Activated T-helper 1 cell treated with anti-CD3 and anti-CD28 coated beads, Interleukin-12 subunit alpha, Interleukin-12 subunit beta, Interleukin-2, Interleukin-4 antibody, amounts not matched to agents 30 ng/mL and 10 ng/mL and 1 ng/mL, durations not matched to agents 14 hours and 24 hours and 36 hours (primary cell): ENCODE measurements at regions of chr6 and their contacts with region 1.

Region 1: GRCh38 chr6:33344701-33345697 is 27.5 kb upstream of the ZBTB22 start:
- DNase-seq: peak; percentile 59
- H3K4me3 Mint-ChIP-seq: peak overlapping the region; percentile 77
- H3K27ac Mint-ChIP-seq: peak overlapping the region; percentile 82
- H3K4me1 Mint-ChIP-seq: peaks cover 26% of the 10 kb centered on the region
- H3K27me3 Mint-ChIP-seq: peaks cover 9% of the 10 kb centered on the region

Region 2: GRCh38 chr6:33018904-33019303 is 326.1 kb before region 1 on chr6:
- intact Hi-C with region 1: no loop called
- DNase-seq: peak; percentile 54
- H3K4me3 Mint-ChIP-seq: peak overlapping the region; percentile 58
- H3K27ac Mint-ChIP-seq: peak overlapping the region; percentile 54
- H3K4me1 Mint-ChIP-seq: peaks cover 37% of the 10 kb centered on the region
- H3K27me3 Mint-ChIP-seq: no peaks in the 10 kb centered on the region

Region 3: DNA sequence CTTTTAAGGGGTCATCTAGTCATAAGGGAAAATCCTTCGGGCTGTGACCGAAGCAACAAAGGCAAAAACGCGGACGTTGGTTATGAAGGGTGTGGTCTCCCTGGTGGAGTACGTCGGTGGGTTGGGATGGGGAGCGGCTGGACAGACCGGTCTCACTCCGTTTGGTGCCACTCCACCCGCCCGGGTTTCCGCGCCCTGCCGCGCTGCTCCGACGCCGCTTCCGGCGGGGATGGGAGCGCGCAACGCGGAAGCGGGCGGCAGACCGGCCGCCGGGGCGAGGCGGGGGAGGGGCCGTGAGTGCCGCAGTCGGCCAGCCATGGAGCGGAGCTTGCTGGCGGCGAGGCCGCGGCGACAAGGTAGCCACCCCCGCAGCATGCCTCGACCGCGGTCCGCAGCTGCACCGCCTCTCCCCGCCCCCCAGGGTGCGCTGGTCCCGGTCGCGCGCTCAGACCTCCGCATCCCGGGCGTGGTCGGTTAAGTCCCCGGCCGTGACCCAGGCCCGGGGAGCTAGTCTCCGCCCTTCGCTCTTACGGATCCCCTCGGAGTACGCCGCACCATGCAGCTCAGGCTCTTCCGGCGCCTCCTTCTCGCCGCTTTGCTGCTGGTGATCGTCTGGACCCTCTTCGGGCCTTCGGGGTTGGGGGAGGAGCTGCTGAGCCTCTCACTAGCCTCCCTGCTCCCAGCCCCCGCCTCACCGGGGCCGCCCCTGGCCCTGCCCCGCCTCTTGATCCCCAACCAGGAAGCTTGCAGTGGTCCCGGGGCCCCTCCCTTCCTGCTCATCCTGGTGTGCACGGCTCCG is 67.9 kb before region 1 on chr6 and contains the start of gene B3GALT4:
- intact Hi-C with region 1: loop called (anchors 2 kb)
- DNase-seq: peak; percentile 75
- H3K4me3 Mint-ChIP-seq: peak within 1 kb of the TSS; percentile 97
- H3K27ac Mint-ChIP-seq: peak within 1 kb of the TSS; percentile 91
- H3K4me1 Mint-ChIP-seq: peaks cover 56% of the 10 kb centered on the region
- H3K27me3 Mint-ChIP-seq: no peaks in the 10 kb centered on the region
- total RNA-seq, gene B3GALT4: 4.4 and 5.6 TPM in 2 replicates

Region 4: DNA sequence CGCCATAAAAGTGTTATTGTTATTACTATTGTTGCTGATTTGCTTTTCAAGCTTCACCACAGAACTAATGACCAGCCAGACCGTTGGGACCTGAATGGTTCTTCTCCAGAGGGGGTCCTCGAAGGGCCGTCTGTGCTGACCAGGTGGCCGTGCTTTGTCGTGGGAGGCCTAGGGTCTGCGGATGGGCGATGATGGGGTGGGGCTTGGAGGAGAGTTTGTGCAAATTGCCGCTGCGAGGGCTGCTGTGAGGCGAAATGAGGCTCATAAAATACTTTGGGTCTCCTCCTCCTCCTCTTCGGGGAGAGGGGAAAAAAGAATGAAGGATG is 21.4 kb before region 1 on chr6:
- intact Hi-C with region 1: loop called (anchors 1 kb)
- DNase-seq: no peak
- H3K4me3 Mint-ChIP-seq: peak overlapping the region; percentile 97
- H3K27ac Mint-ChIP-seq: peak overlapping the region; percentile 98
- H3K4me1 Mint-ChIP-seq: peaks cover 55% of the 10 kb centered on the region
- H3K27me3 Mint-ChIP-seq: no peaks in the 10 kb centered on the region